ENCODE measurements at regions of chr2 and their contacts with region 1.

Region 1: GRCh38 chr2:26968001-26968400 is 2.4 kb upstream of the MAPRE3 start:
- DNase-seq: no peak
- ATAC-seq: peak; percentile 83

Region 2: GRCh38 chr2:26685989-26686839 is 281.8 kb before region 1 on chr2:
- intact Hi-C with region 1: no loop called
- DNase-seq: no peak
- ATAC-seq: peak; percentile 41

Region 3: GRCh38 chr2:27016801-27017325 is 48.9 kb after region 1 on chr2:
- intact Hi-C with region 1: loop called in 1 of 2 experiments (anchors 2 kb)
- DNase-seq: peak in 1 of 2 donors; percentile 76
- ATAC-seq: peak; percentile 31

Region 4: GRCh38 chr2:27086090-27086723 is 118.2 kb after region 1 on chr2:
- intact Hi-C with region 1: loop called in 1 of 2 experiments (anchors 5 kb)
- DNase-seq: peak; percentile 91 to 96
- ATAC-seq: peak; percentile 83

Region 5: GRCh38 chr2:27471961-27472360 is 504.0 kb after region 1 on chr2:
- intact Hi-C with region 1: no loop called
- DNase-seq: no peak
- ATAC-seq: no peak